Transverse colon (tissue), 4 donors: ENCODE measurements at regions of chr12 and their contacts with region 1.

Region 1: DNA sequence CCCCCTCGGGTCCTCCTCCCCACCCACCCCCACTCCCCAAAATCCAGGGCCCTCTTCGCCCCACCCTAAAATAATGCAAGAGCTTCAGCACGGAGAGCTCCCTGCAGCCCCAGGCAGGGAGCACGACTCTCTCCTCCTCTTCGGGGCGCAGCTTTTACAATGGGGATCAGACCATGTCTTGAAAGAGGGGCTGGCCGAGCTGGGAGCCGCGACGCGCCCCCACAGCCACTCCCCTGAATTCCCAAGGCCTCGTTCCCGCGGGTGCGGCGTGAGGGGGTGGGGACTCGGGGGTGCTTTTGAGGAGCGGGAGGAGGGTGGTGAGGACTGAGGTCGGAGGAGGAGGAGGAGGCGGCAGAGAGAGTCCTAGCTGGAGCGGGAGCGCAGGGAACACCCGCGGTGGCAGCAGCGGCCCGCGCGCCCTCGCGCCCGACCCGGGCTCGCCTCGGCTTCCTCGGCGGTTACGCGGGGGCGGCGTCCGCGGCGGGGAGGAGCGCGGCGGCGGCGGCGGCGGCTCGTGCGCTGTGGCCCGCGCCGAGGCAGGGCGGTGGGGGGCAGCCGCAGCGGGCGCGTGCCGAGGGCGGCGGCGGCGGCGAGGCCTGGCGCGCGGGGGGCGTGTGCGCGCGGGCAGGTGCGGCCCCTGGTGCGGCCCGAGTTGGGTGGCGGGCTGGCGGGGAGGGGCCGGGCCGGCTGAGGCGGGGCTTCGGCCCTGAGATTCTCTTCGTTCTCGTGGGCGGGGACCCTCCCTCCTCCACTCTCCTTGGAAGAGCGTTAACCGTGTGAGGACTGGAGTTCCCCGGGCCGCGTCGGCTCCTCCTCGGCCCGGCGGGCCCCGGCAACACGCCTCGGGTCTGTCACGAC is at the start of gene ANKS1B:
- DNase-seq: peak; percentile 24
- H3K4me3 ChIP-seq: peak within 1 kb of the TSS; percentile 47 to 66 (median 48)
- H3K27ac ChIP-seq: peak within 1 kb of the TSS; percentile 50 to 77 (median 66)
- H3K4me1 ChIP-seq: peaks cover 0 to 18% (median 2%) of the 10 kb centered on the region in 4 donors
- H3K27me3 ChIP-seq: peaks cover 30% of the 10 kb centered on the region
- CTCF ChIP-seq: no peak
- EP300 ChIP-seq: no peak
- POLR2A ChIP-seq: no peak
- total RNA-seq, gene ANKS1B: 1.4 to 6.4 (median 3.5) TPM in 3 of 4 donors, not detected in the other

Region 2: GRCh38 chr12:98939350-98939749 is 1045.2 kb before region 1 on chr12:
- in situ Hi-C with region 1: no loop called
- intact Hi-C with region 1: no loop called
- DNase-seq: no peak
- H3K4me3 ChIP-seq: no peak overlapping the region
- H3K27ac ChIP-seq: no peak overlapping the region
- H3K4me1 ChIP-seq: no peaks in the 10 kb centered on the region
- H3K27me3 ChIP-seq: no peaks in the 10 kb centered on the region
- CTCF ChIP-seq: peak in 1 of 5 experiments; percentile 9
- EP300 ChIP-seq: no peak
- POLR2A ChIP-seq: no peak

Region 3: GRCh38 chr12:99567072-99567471 is 417.4 kb before region 1 on chr12:
- in situ Hi-C with region 1: no loop called
- intact Hi-C with region 1: no loop called
- DNase-seq: no peak
- H3K4me3 ChIP-seq: no peak overlapping the region
- H3K27ac ChIP-seq: no peak overlapping the region
- H3K4me1 ChIP-seq: no peaks in the 10 kb centered on the region
- H3K27me3 ChIP-seq: no peaks in the 10 kb centered on the region
- CTCF ChIP-seq: no peak
- EP300 ChIP-seq: no peak
- POLR2A ChIP-seq: no peak

Region 4: GRCh38 chr12:99875081-99875480 is 109.4 kb before region 1 on chr12:
- in situ Hi-C with region 1: loop called in 1 of 4 experiments (anchors 25 kb)
- intact Hi-C with region 1: no loop called
- DNase-seq: no peak
- H3K4me3 ChIP-seq: no peak overlapping the region
- H3K27ac ChIP-seq: no peak overlapping the region
- H3K4me1 ChIP-seq: no peaks in the 10 kb centered on the region
- H3K27me3 ChIP-seq: no peaks in the 10 kb centered on the region
- CTCF ChIP-seq: no peak
- EP300 ChIP-seq: no peak
- POLR2A ChIP-seq: no peak

Region 5: GRCh38 chr12:100077367-100077766 is 92.9 kb after region 1 on chr12:
- in situ Hi-C with region 1: no loop called
- intact Hi-C with region 1: no loop called
- DNase-seq: no peak
- H3K4me3 ChIP-seq: no peak overlapping the region
- H3K27ac ChIP-seq: no peak overlapping the region
- H3K4me1 ChIP-seq: no peaks in the 10 kb centered on the region
- H3K27me3 ChIP-seq: no peaks in the 10 kb centered on the region
- CTCF ChIP-seq: no peak
- EP300 ChIP-seq: no peak
- POLR2A ChIP-seq: no peak